ENCODE measurements at regions of chr4 and their contacts with region 1.

Region 1: GRCh38 chr4:25312496-25313200 is at the start of gene ZCCHC4:
- DNase-seq: peak; percentile 79 to 96 (median 88)
- ATAC-seq: peak; percentile 99
- H3K4me3 ChIP-seq: peak within 1 kb of the TSS; percentile 70
- H3K4me3 Mint-ChIP-seq: peak within 1 kb of the TSS; percentile 97
- H3K27ac ChIP-seq: peak within 1 kb of the TSS; percentile 0 to 40
- H3K27ac Mint-ChIP-seq: peak within 1 kb of the TSS; percentile 90
- H3K4me1 ChIP-seq: peaks cover 13% of the 10 kb centered on the region
- H3K4me1 Mint-ChIP-seq: peaks cover 16% of the 10 kb centered on the region
- H3K27me3 ChIP-seq: peaks cover 0 to 3% of the 10 kb centered on the region in 2 experiments
- H3K27me3 Mint-ChIP-seq: peaks cover 14% of the 10 kb centered on the region
- CTCF ChIP-seq: peak; percentile 100
- total RNA-seq, gene ZCCHC4: 6.4 to 6.7 TPM

Region 2: DNA sequence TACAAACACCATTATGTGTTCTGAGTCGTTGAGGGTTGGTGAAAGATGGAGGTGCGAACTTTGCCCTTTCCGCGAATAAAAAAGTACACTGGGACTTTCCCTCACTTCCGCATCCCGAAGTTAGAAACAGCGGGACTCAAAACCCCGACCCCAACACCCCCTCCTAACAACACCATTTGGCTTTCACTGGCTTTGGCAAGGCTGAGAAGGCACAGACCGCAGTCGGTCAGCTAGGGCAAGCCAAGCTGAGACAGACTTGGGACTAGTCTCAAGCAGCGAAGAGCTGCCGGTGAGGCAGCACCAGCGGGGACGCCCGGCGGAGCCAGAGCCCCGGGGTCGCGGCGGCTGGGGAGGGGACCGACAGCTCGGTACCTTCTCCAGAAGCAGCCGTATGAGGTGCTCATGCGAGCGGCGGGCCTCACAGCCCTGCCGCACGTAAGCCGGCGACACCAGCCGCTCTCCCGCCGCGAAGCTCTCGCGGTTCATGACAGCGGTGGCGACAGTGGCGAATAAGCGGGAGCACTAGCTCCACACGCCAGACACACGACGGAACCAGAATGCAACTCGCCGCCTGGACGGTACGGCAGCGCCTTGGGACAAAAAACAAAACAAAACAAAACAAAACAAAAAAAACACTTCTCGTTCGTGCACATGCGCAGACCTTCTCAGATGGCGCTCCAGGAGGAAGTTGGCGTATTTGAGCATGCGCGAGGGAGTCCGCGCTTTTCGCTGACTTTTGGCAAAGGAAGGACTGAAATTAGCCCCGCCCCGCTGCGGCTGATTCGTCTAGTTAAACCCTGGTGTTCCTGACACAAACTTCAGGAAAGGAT is 152.5 kb before region 1 on chr4 and contains the start of gene SEPSECS:
- CTCF ChIA-PET with region 1: interaction called, 48 read pairs
- POLR2A ChIA-PET with region 1: interaction called, 51 read pairs
- intact Hi-C with region 1: loop called (anchors 1 to 5 kb)
- DNase-seq: peak; percentile 84 to 98 (median 92)
- ATAC-seq: peak; percentile 82
- H3K4me3 ChIP-seq: peak within 1 kb of the TSS; percentile 91
- H3K4me3 Mint-ChIP-seq: peak within 1 kb of the TSS; percentile 93
- H3K27ac ChIP-seq: peak within 1 kb of the TSS; percentile 97 to 98
- H3K27ac Mint-ChIP-seq: peak within 1 kb of the TSS; percentile 96
- H3K4me1 ChIP-seq: peaks cover 26% of the 10 kb centered on the region
- H3K4me1 Mint-ChIP-seq: peaks cover 68% of the 10 kb centered on the region
- H3K27me3 ChIP-seq: no peaks in the 10 kb centered on the region
- H3K27me3 Mint-ChIP-seq: no peaks in the 10 kb centered on the region
- CTCF ChIP-seq: no peak
- total RNA-seq, gene SEPSECS: 18.5 to 18.7 TPM

Region 3: GRCh38 chr4:25258981-25259578 is 53.6 kb before region 1 on chr4:
- CTCF ChIA-PET with region 1: interaction called, 11 read pairs
- POLR2A ChIA-PET with region 1: interaction called, 5 read pairs
- intact Hi-C with region 1: no loop called
- DNase-seq: no peak
- ATAC-seq: no peak
- H3K4me3 ChIP-seq: no peak overlapping the region
- H3K4me3 Mint-ChIP-seq: no peak overlapping the region
- H3K27ac ChIP-seq: no peak overlapping the region
- H3K27ac Mint-ChIP-seq: no peak overlapping the region
- H3K4me1 ChIP-seq: no peaks in the 10 kb centered on the region
- H3K4me1 Mint-ChIP-seq: no peaks in the 10 kb centered on the region
- H3K27me3 ChIP-seq: no peaks in the 10 kb centered on the region
- H3K27me3 Mint-ChIP-seq: no peaks in the 10 kb centered on the region
- CTCF ChIP-seq: no peak

Region 4: DNA sequence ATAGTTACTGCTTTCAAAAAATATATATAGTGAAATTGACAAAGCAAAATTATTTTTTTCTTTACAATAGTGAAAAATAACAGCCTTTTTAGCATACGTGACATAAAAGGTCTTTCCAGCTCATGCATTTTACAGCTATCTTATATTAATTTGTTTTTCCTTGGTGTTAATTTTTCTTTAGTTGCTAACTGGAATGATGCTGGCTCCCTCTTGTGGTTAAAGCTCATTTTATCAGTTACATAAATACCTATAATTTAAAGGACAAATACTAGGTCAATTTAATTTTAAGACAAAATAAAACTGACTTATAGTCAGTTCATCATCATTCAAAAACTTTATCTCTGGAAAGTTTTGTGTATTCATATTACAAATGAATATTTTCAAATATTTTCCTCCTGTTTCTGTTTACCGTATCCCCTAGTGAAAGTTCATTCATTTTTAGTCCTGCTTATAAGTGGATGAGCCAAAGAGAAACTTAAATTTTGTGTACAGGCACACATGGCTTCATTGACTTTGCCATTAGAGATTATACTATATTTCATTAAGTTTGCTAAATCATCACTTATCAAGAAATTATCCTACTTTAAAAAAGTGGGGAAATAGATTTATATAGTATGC is 54.5 kb after region 1 on chr4:
- CTCF ChIA-PET with region 1: interaction called, 18 read pairs
- POLR2A ChIA-PET with region 1: interaction called, 11 read pairs
- intact Hi-C with region 1: no loop called
- DNase-seq: peak in 3 of 14 experiments; percentile 47 to 63 (median 59)
- ATAC-seq: no peak
- H3K4me3 ChIP-seq: no peak overlapping the region
- H3K4me3 Mint-ChIP-seq: no peak overlapping the region
- H3K27ac ChIP-seq: no peak overlapping the region
- H3K27ac Mint-ChIP-seq: no peak overlapping the region
- H3K4me1 ChIP-seq: no peaks in the 10 kb centered on the region
- H3K4me1 Mint-ChIP-seq: no peaks in the 10 kb centered on the region
- H3K27me3 ChIP-seq: no peaks in the 10 kb centered on the region
- H3K27me3 Mint-ChIP-seq: no peaks in the 10 kb centered on the region
- CTCF ChIP-seq: peak; percentile 72

Region 5: GRCh38 chr4:25400699-25401399 is 88.2 kb after region 1 on chr4:
- CTCF ChIA-PET with region 1: no interaction called
- POLR2A ChIA-PET with region 1: no interaction called
- intact Hi-C with region 1: no loop called
- DNase-seq: no peak
- ATAC-seq: no peak
- H3K4me3 ChIP-seq: no peak overlapping the region
- H3K4me3 Mint-ChIP-seq: no peak overlapping the region
- H3K27ac ChIP-seq: no peak overlapping the region
- H3K27ac Mint-ChIP-seq: no peak overlapping the region
- H3K4me1 ChIP-seq: no peaks in the 10 kb centered on the region
- H3K4me1 Mint-ChIP-seq: no peaks in the 10 kb centered on the region
- H3K27me3 ChIP-seq: no peaks in the 10 kb centered on the region
- H3K27me3 Mint-ChIP-seq: no peaks in the 10 kb centered on the region
- CTCF ChIP-seq: no peak

Region 6: DNA sequence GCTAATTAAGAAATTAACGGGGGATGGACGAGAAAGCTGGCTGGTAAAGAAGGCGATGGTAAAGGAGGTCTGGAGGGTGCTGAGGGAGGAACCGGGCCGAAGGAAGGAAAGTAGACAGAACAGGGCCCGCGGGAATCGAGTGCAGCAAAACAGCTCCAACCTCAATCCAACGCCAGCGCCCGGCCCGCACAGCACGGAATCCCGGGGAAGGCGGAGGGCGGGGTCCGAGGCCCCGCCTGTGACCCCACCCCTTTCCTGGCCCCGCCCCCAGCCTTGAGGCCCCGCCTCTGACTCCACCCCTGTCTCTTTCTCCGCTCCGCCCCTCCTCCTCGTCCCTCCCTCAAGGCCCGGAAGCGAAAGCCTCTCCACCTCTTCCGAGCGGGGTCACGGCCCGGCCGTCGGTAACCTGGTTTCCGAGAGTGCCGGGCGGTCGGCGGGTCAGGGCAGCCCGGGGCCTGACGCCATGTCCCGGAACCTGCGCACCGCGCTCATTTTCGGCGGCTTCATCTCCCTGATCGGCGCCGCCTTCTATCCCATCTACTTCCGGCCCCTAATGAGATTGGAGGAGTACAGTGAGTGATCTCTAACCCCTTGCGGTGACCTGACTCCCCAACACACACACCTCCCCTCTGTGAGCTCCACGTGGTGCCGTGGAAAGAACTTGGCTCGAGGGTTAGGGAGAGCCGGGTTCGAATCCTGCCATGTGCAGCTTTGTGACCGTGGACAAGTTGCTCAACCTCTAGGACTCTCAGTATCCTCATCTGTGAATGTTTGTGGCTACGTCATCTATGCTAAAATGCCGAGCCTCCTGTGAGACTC is 601.4 kb after region 1 on chr4 and contains the start of gene SMIM20:
- CTCF ChIA-PET with region 1: interaction called, 15 read pairs
- POLR2A ChIA-PET with region 1: no interaction called
- intact Hi-C with region 1: loop called in 1 of 2 experiments (anchors 5 kb)
- DNase-seq: peak; percentile 82 to 96 (median 86)
- ATAC-seq: peak; percentile 89
- H3K4me3 ChIP-seq: peak within 1 kb of the TSS; percentile 92
- H3K4me3 Mint-ChIP-seq: peak within 1 kb of the TSS; percentile 94
- H3K27ac ChIP-seq: peak within 1 kb of the TSS; percentile 79 to 85
- H3K27ac Mint-ChIP-seq: peak within 1 kb of the TSS; percentile 96
- H3K4me1 ChIP-seq: peaks cover 25% of the 10 kb centered on the region
- H3K4me1 Mint-ChIP-seq: peaks cover 26% of the 10 kb centered on the region
- H3K27me3 ChIP-seq: no peaks in the 10 kb centered on the region
- H3K27me3 Mint-ChIP-seq: no peaks in the 10 kb centered on the region
- CTCF ChIP-seq: no peak
- total RNA-seq, gene SMIM20: 7.2 to 9.1 TPM